ENCODE measurements at regions of chr4 and their contacts with region 1.

Region 1: GRCh38 chr4:42673082-42673425 is 16.1 kb upstream of the ATP8A1 start:
- DNase-seq: peak in 1 of 2 donors; percentile 80
- H3K4me3 ChIP-seq: no peak overlapping the region
- H3K27ac ChIP-seq: peak overlapping the region; percentile 14 to 45
- H3K4me1 ChIP-seq: peaks cover 0 to 3% of the 10 kb centered on the region in 2 donors
- H3K27me3 ChIP-seq: no peaks in the 10 kb centered on the region
- CTCF ChIP-seq: no peak

Region 2: DNA sequence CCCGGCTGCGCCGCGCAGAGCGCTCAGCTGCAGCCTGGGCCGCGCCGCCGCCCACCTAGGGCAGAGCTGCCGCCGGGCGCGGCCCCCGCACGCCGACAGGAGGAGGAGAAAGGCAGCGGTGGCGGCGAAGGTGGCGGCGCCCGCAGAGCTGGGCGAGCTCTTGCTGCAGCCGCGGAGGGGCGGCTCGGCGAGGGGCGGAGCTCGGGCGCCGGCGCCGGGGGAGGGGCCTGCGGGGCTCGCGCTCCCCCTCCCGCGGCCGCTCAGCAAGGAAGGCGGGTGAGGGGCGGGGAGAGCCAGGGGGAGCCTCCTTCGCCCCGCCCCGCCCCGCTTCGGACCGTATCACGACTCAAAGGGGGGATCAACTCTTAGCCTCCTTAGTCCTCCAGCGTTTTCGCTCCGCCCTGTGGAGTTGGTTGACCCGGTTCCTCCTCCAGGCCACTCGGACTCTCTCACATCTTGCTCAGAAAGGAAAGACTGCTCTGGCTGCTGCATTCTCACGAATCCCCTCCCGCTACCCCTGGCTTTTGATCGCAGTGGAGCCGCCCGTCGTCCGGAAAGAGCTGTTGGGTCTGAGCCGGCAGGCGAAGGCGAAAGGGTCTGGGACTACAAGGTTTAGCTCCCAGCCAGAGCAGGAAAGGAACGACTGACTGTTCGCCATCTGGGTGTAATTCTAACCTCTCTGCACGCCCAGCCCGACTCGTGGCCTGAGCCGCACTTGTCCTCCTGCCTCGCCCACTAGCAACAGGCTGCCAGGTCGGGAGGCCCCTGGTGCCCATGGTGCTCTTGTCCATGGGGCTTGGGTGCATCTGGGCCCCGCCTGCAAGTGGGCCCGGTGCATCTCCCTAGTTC is 15.9 kb before region 1 on chr4 and contains the start of gene ATP8A1:
- intact Hi-C with region 1: loop called (anchors 2 kb)
- DNase-seq: peak; percentile 64 to 95
- H3K4me3 ChIP-seq: peak within 1 kb of the TSS; percentile 92 to 95
- H3K27ac ChIP-seq: peak within 1 kb of the TSS; percentile 63 to 91
- H3K4me1 ChIP-seq: peaks cover 4 to 9% of the 10 kb centered on the region in 2 donors
- H3K27me3 ChIP-seq: no peaks in the 10 kb centered on the region
- CTCF ChIP-seq: no peak
- total RNA-seq, gene ATP8A1: 11.4 TPM

Region 3: GRCh38 chr4:42915484-42915883 is 242.4 kb after region 1 on chr4:
- intact Hi-C with region 1: no loop called
- DNase-seq: no peak
- H3K4me3 ChIP-seq: no peak overlapping the region
- H3K27ac ChIP-seq: no peak overlapping the region
- H3K4me1 ChIP-seq: no peaks in the 10 kb centered on the region
- H3K27me3 ChIP-seq: no peaks in the 10 kb centered on the region
- CTCF ChIP-seq: no peak

Measured in ascending aorta (tissue), 2 donors.